ENCODE measurements at regions of chr2 and their contacts with region 1.

Region 1: DNA sequence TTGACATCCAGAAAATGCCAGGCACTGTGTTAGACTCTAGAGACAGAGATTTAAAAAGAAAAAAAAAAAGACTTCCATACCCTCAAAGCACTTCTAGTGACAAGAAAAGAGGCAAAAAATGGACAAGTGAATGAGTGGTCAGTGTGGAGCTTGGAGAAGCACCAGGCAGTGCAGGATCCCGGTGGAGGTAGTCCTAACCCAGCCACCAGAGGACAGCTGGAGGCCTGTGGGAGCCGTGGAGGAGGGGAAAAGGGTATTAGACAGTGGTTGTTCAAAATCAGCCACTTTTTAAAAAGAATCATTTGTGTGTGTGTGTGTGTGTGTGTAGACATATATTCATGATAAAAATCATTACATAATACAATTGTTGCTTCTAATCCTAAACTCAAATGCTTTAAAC is 32.8 kb upstream of the EPAS1 start:
- DNase-seq: no peak
- ATAC-seq: no peak
- H3K4me3 ChIP-seq: no peak overlapping the region
- H3K27ac ChIP-seq: no peak overlapping the region
- H3K4me1 ChIP-seq: peaks cover under 1% of the 10 kb centered on the region
- H3K27me3 ChIP-seq: peaks cover 12% of the 10 kb centered on the region
- CTCF ChIP-seq: no peak
- POLR2A ChIP-seq: no peak
- RAD21 ChIP-seq: no peak

Region 2: GRCh38 chr2:45797451-45798230 is 466.8 kb before region 1 on chr2:
- CTCF ChIA-PET with region 1: no interaction called
- POLR2A ChIA-PET with region 1: no interaction called
- dilution Hi-C with region 1: no loop called
- in situ Hi-C with region 1: no loop called
- intact Hi-C with region 1: no loop called
- DNase-seq: no peak
- ATAC-seq: no peak; the same call in 1 of the 2 replicates
- H3K4me3 ChIP-seq: no peak overlapping the region
- H3K27ac ChIP-seq: no peak overlapping the region
- H3K4me1 ChIP-seq: peaks cover 2% of the 10 kb centered on the region; the same call in 1 of the 2 replicates
- H3K27me3 ChIP-seq: no peaks in the 10 kb centered on the region
- CTCF ChIP-seq: no peak
- POLR2A ChIP-seq: no peak
- RAD21 ChIP-seq: no peak

Region 3: GRCh38 chr2:47288864-47289263 is 1024.4 kb after region 1 on chr2:
- CTCF ChIA-PET with region 1: interaction called, 11 read pairs
- POLR2A ChIA-PET with region 1: no interaction called
- dilution Hi-C with region 1: no loop called
- in situ Hi-C with region 1: no loop called
- intact Hi-C with region 1: no loop called
- DNase-seq: peak; percentile 94
- ATAC-seq: peak; percentile 75
- H3K4me3 ChIP-seq: no peak overlapping the region
- H3K27ac ChIP-seq: no peak overlapping the region
- H3K4me1 ChIP-seq: peaks cover 8% of the 10 kb centered on the region
- H3K27me3 ChIP-seq: no peaks in the 10 kb centered on the region
- CTCF ChIP-seq: no peak
- POLR2A ChIP-seq: no peak
- RAD21 ChIP-seq: no peak